ENCODE measurements at regions of chr6 and their contacts with region 1.

Region 1: DNA sequence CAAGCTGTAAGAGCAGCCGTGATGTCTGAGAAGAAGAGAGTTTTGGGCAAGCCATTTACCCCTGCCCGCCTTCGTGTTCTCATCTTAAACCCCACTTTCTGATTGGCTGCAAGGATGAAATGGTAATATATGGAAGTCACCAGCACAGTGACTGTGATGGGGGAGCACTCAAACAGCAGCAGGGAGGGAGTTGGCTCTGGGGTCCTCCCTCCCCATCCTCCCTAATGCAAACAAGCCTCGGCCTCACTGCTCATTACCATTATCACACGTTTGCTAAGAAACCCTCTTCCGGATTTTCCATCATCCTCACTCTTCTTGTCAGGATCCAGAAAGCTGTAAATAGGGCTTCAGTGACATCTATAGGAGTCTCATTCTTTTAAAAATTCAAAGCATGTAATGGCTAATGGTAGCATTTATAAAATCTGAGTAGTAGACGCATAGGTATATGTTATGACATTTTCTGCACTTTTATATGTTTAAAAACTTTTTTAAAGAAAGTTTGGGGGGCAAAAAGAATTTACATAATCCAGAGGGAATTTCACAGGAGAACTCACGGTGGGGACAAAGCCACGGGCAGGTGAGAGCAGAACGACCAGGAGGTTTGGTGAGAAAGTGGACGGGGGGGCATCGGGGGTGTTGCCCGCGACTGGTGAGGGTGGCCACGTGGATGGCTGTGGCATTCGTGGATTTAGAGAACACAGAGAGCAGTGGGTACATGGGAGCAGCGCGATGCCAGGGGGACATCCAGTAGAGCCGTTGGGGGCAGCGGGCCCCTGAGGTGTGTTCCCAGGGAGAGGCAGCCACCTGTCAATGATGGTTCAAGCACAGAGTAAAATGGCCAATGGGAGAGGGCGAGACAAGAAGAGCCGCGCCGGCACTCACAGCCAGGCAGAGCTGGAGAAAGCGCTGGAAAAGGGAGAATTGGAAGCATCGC is 29.6 kb downstream of the SUMO4 start:
- DNase-seq: no peak
- H3K4me3 ChIP-seq: no peak overlapping the region
- H3K27ac ChIP-seq: no peak overlapping the region
- H3K4me1 ChIP-seq: no peaks in the 10 kb centered on the region
- H3K27me3 ChIP-seq: no peaks in the 10 kb centered on the region
- CTCF ChIP-seq: no peak
- POLR2A ChIP-seq: no peak

Region 2: DNA sequence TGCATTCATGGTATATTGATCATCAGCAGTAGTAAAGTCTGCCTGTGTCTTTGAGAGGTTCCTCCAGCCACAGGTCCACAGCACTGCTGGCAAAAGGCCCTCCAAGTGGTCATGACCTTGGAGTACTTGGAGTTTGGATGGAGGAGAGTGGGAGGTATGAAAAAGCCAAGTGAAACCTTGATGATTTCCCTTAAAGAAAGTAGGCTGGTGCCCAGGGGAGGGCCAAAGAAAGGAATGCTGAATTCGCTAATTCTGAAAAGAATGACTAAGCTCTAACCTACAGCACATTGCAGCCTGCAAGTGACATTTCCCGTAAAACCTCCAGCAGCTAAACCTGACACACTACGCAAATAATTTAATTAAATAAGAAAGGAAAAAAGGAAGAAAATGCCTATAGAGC is 335.5 kb before region 1 on chr6:
- intact Hi-C with region 1: loop called (anchors 10 kb)
- DNase-seq: no peak
- H3K4me3 ChIP-seq: no peak overlapping the region
- H3K27ac ChIP-seq: peak overlapping the region in 1 of 2 donors; percentile 0
- H3K4me1 ChIP-seq: peaks cover 0 to 8% of the 10 kb centered on the region in 2 donors
- H3K27me3 ChIP-seq: no peaks in the 10 kb centered on the region
- CTCF ChIP-seq: no peak
- POLR2A ChIP-seq: no peak